ENCODE measurements at regions of chr6 and their contacts with region 1.

Region 1: GRCh38 chr6:98641949-98642348 is 192.4 kb upstream of the POU3F2 start:
- DNase-seq: peak in 31 of 42 donors; percentile 10 to 79 (median 45)

Region 2: DNA sequence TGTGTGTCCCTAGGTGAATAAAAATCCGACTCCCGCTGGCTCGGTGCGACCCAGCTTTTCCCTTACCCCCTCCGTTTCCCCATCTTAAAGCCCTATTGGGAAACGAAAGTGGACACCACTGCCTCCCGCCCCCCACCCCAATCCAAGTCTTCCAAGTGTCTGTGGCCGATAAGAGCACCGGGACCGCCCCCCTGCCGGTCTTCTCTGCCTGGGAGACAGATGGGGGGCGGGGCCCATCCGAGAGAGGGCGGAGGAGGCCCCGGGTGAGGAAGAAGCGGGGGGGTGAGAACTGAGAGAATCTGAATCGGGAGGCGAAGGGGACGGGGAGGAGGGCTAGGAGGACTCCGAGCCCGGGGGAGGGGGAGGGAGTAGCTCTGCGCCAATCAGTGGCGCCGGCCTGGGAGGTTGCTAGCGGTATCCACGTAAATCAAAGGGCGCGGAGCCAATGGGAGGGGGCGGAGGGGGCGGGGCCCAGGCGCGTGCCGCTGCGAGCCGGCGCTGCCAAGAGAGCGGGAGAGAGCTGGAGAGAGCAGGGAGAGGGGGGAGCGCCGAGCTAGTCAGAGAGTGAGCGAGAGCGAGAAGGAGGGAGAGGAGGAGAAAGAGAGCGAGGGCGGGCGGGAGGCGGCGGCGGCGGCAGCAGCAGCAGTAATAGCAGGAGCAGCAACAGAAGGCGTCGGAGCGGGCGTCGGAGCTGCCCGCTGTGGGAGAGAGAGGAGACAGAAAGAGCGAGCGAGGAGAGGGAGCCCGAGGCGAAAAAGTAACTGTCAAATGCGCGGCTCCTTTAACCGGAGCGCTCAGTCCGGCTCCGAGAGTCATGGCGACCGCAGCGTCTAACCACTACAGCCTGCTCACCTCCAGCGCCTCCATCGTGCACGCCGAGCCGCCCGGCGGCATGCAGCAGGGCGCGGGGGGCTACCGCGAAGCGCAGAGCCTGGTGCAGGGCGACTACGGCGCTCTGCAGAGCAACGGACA is 192.4 kb after region 1 on chr6 and contains the start of gene POU3F2:
- intact Hi-C with region 1: loop called (anchors 10 kb)
- DNase-seq: peak; percentile 91 to 99 (median 97)

Measured in head of caudate nucleus (tissue), 42 donors.